ENCODE measurements at regions of chr14 and their contacts with region 1.

Region 1: DNA sequence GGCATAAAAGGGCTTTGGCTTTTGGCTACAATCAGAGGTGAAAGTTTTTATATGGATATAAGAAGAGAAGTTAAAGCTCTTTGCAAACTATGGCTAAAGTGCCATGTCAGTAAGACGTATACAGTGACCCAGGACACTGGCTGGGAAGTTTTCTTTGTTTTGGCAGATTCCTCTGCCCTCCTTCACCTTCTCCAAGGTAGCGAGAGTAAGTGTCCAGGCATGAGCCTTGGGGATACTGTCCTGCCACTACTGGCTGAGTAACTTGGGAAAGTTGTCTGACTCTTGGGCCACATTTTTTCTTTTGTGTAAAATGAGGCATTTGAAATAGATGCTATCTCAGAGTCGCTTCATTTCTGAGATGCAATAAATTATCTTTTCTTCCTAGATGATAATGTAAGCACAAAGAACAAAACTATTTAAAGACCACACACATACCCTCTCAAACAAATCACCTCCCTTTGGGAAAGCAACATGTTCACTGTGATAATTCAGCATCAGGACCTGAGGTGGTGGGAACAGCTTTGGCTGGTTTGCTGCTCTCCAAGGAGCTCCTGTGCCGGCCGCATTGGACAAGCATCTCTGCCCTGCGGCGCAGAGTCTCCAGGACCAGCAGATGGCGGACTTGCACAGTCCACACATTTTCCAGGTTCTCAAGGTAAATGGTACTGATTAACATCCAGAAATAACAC is 106.3 kb downstream of the PTCSC3 start:
- DNase-seq: peak; percentile 54 to 59
- H3K4me3 ChIP-seq: no peak overlapping the region
- H3K27ac ChIP-seq: peak overlapping the region; percentile 56; the same call in 1 of the 2 replicates
- H3K4me1 ChIP-seq: peaks cover 23% of the 10 kb centered on the region
- H3K27me3 ChIP-seq: no peaks in the 10 kb centered on the region
- CTCF ChIP-seq: peak; percentile 63

Region 2: GRCh38 chr14:35826218-35826951 is 243.8 kb before region 1 on chr14 and contains the start of gene BRMS1L:
- CTCF ChIA-PET with region 1: no interaction called
- POLR2A ChIA-PET with region 1: interaction called, 5 read pairs
- intact Hi-C with region 1: loop called (anchors 5 kb)
- DNase-seq: peak; percentile 92 to 93
- H3K4me3 ChIP-seq: peak within 1 kb of the TSS; percentile 90
- H3K27ac ChIP-seq: peak within 1 kb of the TSS; percentile 84
- H3K4me1 ChIP-seq: peaks cover 8% of the 10 kb centered on the region
- H3K27me3 ChIP-seq: no peaks in the 10 kb centered on the region
- CTCF ChIP-seq: no peak
- total RNA-seq, gene BRMS1L: 5.7 and 8.0 TPM in 2 replicates

Region 3: GRCh38 chr14:36006623-36007022 is 63.6 kb before region 1 on chr14:
- CTCF ChIA-PET with region 1: no interaction called
- POLR2A ChIA-PET with region 1: no interaction called
- intact Hi-C with region 1: loop called (anchors 10 kb)
- DNase-seq: no peak
- H3K4me3 ChIP-seq: no peak overlapping the region
- H3K27ac ChIP-seq: no peak overlapping the region
- H3K4me1 ChIP-seq: no peaks in the 10 kb centered on the region
- H3K27me3 ChIP-seq: no peaks in the 10 kb centered on the region
- CTCF ChIP-seq: no peak

Region 4: GRCh38 chr14:36083317-36083716 is 13.1 kb after region 1 on chr14:
- CTCF ChIA-PET with region 1: no interaction called
- POLR2A ChIA-PET with region 1: no interaction called
- intact Hi-C with region 1: no loop called
- DNase-seq: no peak
- H3K4me3 ChIP-seq: no peak overlapping the region
- H3K27ac ChIP-seq: no peak overlapping the region
- H3K4me1 ChIP-seq: no peaks in the 10 kb centered on the region
- H3K27me3 ChIP-seq: no peaks in the 10 kb centered on the region
- CTCF ChIP-seq: no peak

Region 5: GRCh38 chr14:36099619-36100018 is 29.4 kb after region 1 on chr14:
- CTCF ChIA-PET with region 1: no interaction called
- POLR2A ChIA-PET with region 1: no interaction called
- intact Hi-C with region 1: no loop called
- DNase-seq: no peak
- H3K4me3 ChIP-seq: no peak overlapping the region
- H3K27ac ChIP-seq: no peak overlapping the region
- H3K4me1 ChIP-seq: no peaks in the 10 kb centered on the region
- H3K27me3 ChIP-seq: no peaks in the 10 kb centered on the region
- CTCF ChIP-seq: no peak

Region 6: GRCh38 chr14:36373982-36374673 is 304.0 kb after region 1 on chr14:
- CTCF ChIA-PET with region 1: interaction called, 3 read pairs
- POLR2A ChIA-PET with region 1: no interaction called
- intact Hi-C with region 1: loop called (anchors 1 kb)
- DNase-seq: peak; percentile 42 to 55
- H3K4me3 ChIP-seq: no peak overlapping the region
- H3K27ac ChIP-seq: no peak overlapping the region
- H3K4me1 ChIP-seq: no peaks in the 10 kb centered on the region
- H3K27me3 ChIP-seq: no peaks in the 10 kb centered on the region
- CTCF ChIP-seq: peak; percentile 82

Region 7: DNA sequence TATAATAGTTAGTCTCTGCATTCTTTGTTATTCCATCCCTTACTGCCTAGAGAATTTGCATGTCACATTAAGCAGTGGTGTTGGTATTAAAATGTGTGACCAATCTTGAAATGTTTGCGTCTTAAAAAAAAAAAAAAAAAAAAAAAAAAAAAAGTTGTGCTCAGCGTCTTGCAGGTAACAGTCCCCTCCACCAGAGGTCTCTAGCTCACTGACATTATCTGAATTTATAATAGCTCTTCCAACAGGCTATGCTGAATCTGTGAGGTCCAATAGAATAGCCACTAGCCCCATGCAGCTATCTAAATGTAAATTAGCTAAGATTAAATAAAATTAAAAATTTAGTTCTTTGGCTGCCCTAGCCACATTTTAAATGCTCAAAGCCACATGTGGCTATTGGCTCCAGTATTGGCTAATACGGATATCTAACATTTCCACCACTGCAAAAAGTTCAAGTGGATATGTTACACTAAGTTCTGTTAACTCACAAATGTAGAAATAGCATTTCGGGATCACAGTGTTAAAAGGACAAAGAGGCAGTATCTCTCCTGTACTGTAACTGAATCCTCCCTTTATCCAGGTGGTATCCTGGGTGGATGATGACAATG is 483.6 kb after region 1 on chr14:
- CTCF ChIA-PET with region 1: interaction called, 12 read pairs
- POLR2A ChIA-PET with region 1: no interaction called
- intact Hi-C with region 1: no loop called
- DNase-seq: peak; percentile 18 to 36
- H3K4me3 ChIP-seq: no peak overlapping the region
- H3K27ac ChIP-seq: no peak overlapping the region
- H3K4me1 ChIP-seq: no peaks in the 10 kb centered on the region
- H3K27me3 ChIP-seq: no peaks in the 10 kb centered on the region
- CTCF ChIP-seq: peak; percentile 65

Region 8: GRCh38 chr14:37150414-37150813 is 1080.2 kb after region 1 on chr14:
- CTCF ChIA-PET with region 1: interaction called, 5 read pairs
- POLR2A ChIA-PET with region 1: no interaction called
- intact Hi-C with region 1: loop called (anchors 5 kb)
- DNase-seq: no peak
- H3K4me3 ChIP-seq: no peak overlapping the region
- H3K27ac ChIP-seq: no peak overlapping the region
- H3K4me1 ChIP-seq: no peaks in the 10 kb centered on the region
- H3K27me3 ChIP-seq: no peaks in the 10 kb centered on the region
- CTCF ChIP-seq: peak; percentile 79